ENCODE measurements at regions of chr3 and their contacts with region 1.

Region 1: GRCh38 chr3:24657870-24658539 is 163.4 kb upstream of the THRB start:
- DNase-seq: peak; percentile 72
- ATAC-seq: peak; percentile 91
- H3K4me3 ChIP-seq: peak overlapping the region; percentile 18; the same call in 1 of the 2 replicates
- H3K27ac ChIP-seq: peak overlapping the region; percentile 48
- H3K4me1 ChIP-seq: peaks cover 20% of the 10 kb centered on the region
- H3K27me3 ChIP-seq: no peaks in the 10 kb centered on the region
- CTCF ChIP-seq: no peak

Region 2: GRCh38 chr3:23600167-23600871 is 1057.7 kb before region 1 on chr3:
- CTCF ChIA-PET with region 1: no interaction called
- POLR2A ChIA-PET with region 1: no interaction called
- intact Hi-C with region 1: loop called (anchors 5 kb)
- DNase-seq: peak; percentile 95
- ATAC-seq: peak; percentile 100
- H3K4me3 ChIP-seq: no peak overlapping the region
- H3K27ac ChIP-seq: peak overlapping the region; percentile 64
- H3K4me1 ChIP-seq: peaks cover 21% of the 10 kb centered on the region
- H3K27me3 ChIP-seq: no peaks in the 10 kb centered on the region
- CTCF ChIP-seq: no peak

Region 3: GRCh38 chr3:24628523-24629258 is 29.3 kb before region 1 on chr3:
- CTCF ChIA-PET with region 1: no interaction called
- POLR2A ChIA-PET with region 1: no interaction called
- intact Hi-C with region 1: loop called (anchors 1 kb)
- DNase-seq: peak; percentile 89
- ATAC-seq: peak; percentile 97
- H3K4me3 ChIP-seq: no peak overlapping the region
- H3K27ac ChIP-seq: no peak overlapping the region
- H3K4me1 ChIP-seq: peaks cover 13% of the 10 kb centered on the region
- H3K27me3 ChIP-seq: no peaks in the 10 kb centered on the region
- CTCF ChIP-seq: no peak

Measured in PC-3 (cell line).